ENCODE measurements at regions of chr1 and their contacts with region 1.

Region 1: GRCh38 chr1:41735631-41736260 is 183.0 kb downstream of the HIVEP3 start:
- DNase-seq: no peak
- H3K27ac ChIP-seq: no peak overlapping the region
- CTCF ChIP-seq: no peak

Region 2: GRCh38 chr1:41720861-41721410 is 14.8 kb before region 1 on chr1:
- CTCF ChIA-PET with region 1: no interaction called
- POLR2A ChIA-PET with region 1: no interaction called
- DNase-seq: no peak
- H3K27ac ChIP-seq: no peak overlapping the region
- CTCF ChIP-seq: no peak

Region 3: GRCh38 chr1:42137766-42138165 is 402.0 kb after region 1 on chr1:
- CTCF ChIA-PET with region 1: no interaction called
- POLR2A ChIA-PET with region 1: no interaction called
- DNase-seq: no peak
- H3K27ac ChIP-seq: no peak overlapping the region
- CTCF ChIP-seq: no peak

Region 4: DNA sequence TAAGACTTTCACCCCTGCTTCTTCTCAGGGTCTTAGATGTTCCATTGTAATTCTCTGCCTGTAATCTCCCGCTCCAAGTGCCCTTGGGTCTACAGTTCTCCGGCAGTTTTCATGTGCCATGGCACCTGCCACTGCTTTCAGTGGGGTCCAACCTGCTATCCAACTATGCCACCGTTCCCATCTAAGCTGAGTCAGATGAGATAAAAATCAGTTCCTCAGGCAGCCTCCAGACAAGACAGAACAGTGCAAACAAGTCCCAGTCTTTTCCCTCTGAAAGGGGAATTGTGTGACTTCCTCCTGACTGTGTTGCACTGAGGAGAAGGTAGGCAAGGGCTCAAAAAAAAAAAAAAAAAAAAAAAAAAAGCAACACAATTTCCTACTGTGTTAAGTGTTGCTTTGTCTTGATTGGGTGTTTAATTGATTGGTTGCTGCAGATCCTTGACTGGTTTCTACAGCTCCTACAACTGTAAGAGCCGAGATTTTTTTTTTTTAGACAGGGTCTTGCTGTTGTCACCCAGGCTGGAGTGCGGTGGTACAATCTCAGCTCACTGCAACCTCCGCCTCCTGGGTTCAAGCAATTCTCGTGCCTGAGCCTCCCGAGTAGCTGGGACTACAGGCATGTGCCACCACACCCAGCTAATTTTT is 1385.6 kb after region 1 on chr1:
- CTCF ChIA-PET with region 1: no interaction called
- POLR2A ChIA-PET with region 1: interaction called, 11 read pairs
- DNase-seq: peak; percentile 33
- H3K27ac ChIP-seq: peak overlapping the region; percentile 74
- CTCF ChIP-seq: no peak